Caco-2 (cell line): ENCODE measurements at regions of chr17 and their contacts with region 1.

Region 1: DNA sequence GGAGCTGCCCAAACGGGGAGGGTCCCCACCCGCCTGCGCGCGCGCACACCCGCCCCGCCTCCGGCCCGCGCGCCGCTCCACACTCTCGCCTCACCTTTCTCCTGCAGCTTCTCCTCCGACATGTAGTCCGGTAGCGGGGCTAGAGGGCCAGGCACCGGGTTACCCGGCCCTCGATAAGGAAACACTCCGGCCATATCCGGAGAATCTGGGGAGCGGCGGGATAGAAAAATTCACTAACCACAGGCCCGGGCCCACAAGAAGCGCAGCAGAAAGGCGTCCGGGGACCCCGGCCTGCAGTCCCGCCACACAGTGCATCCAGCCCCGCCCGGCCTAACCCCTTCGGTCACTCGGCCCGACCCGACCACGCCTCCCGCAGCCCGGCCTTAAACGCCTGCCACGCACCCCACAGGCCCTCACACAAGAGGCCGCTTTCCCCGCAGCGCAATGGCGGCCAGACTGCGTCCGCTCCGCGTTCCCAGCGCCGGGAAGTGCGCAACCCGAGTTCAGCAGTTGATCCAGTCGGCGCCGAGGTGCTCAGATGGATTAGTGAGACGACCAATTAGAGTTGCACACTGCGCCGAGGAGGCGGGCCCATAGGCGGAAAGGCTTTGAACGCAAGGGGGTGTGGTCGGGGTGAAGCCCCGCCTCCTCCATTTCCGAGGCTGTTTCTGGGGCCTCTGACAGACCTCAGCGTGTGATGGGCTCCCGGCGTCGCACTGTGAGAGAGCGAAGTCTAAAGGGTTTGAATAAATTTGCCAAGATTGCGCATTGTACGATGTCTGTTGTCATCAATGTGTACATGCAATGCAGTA is at the start of gene PRPF8:
- DNase-seq: peak; percentile 98 to 99
- H3K4me3 ChIP-seq: peak within 1 kb of the TSS; percentile 54
- H3K4me3 Mint-ChIP-seq: peak within 1 kb of the TSS; percentile 91
- H3K27ac Mint-ChIP-seq: peak within 1 kb of the TSS; percentile 95
- H3K4me1 ChIP-seq: peaks cover 5% of the 10 kb centered on the region; the same call in 1 of the 2 replicates
- H3K4me1 Mint-ChIP-seq: peaks cover 13% of the 10 kb centered on the region
- H3K27me3 ChIP-seq: no peaks in the 10 kb centered on the region
- H3K27me3 Mint-ChIP-seq: no peaks in the 10 kb centered on the region
- CTCF ChIP-seq: no peak
- total RNA-seq, gene PRPF8: 398 and 430 TPM in 2 replicates

Region 2: GRCh38 chr17:1673041-1673785 is 11.4 kb before region 1 on chr17:
- CTCF ChIA-PET with region 1: interaction called, 6 read pairs
- POLR2A ChIA-PET with region 1: interaction called, 4 read pairs
- intact Hi-C with region 1: loop called (anchors 1 kb)
- DNase-seq: no peak
- H3K4me3 ChIP-seq: no peak overlapping the region
- H3K4me3 Mint-ChIP-seq: no peak overlapping the region
- H3K27ac Mint-ChIP-seq: no peak overlapping the region
- H3K4me1 ChIP-seq: no peaks in the 10 kb centered on the region
- H3K4me1 Mint-ChIP-seq: peaks cover 23% of the 10 kb centered on the region
- H3K27me3 ChIP-seq: no peaks in the 10 kb centered on the region
- H3K27me3 Mint-ChIP-seq: no peaks in the 10 kb centered on the region
- CTCF ChIP-seq: no peak

Region 3: DNA sequence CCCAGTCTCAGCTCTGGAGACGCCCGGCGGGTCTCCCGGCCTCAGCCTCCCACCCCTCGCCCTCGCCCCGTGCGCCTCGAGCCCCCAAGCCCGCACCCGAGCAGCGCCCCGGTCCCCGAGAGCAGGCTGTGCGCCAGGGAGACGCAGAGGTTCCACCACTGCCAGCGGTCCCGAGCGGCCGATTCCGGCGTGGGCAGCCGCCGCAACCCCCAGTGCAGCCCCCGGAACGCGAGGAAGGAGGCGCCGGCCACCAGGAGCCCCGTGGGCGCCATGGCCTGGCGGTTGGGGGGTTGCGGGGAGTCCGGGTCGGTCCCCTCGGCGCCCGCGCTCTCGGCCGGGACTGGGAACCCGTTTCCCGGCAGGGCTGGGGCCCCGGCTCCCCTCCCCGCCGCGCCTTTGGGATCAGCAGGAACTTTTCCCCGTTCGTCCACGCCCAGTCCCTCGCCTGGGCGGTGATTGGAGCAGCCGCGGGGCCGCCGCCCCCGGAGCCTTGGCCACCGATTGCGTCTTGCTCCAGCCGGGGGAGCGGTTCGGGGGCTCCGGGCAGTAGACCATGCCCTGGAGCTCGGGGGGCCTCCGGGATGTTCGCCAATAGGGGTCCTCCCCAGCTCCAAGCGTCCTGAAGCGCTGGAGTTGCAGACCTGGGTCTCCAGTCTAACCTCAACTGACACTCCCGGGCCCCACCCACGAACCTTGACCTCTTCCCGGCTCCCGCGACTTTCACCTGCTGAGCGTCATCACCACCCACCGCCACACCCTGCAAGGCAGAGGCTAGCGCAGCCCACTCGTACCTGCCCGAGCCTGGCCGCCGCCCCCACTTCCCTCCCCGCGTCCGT is 25.6 kb after region 1 on chr17 and contains the start of gene TLCD2:
- CTCF ChIA-PET with region 1: no interaction called
- POLR2A ChIA-PET with region 1: interaction called, 20 read pairs
- intact Hi-C with region 1: loop called (anchors 2 kb)
- DNase-seq: peak; percentile 92 to 94
- H3K4me3 ChIP-seq: peak within 1 kb of the TSS; percentile 71
- H3K4me3 Mint-ChIP-seq: peak within 1 kb of the TSS; percentile 86
- H3K27ac Mint-ChIP-seq: peak within 1 kb of the TSS; percentile 95
- H3K4me1 ChIP-seq: peaks cover 31% of the 10 kb centered on the region
- H3K4me1 Mint-ChIP-seq: peaks cover 34% of the 10 kb centered on the region
- H3K27me3 ChIP-seq: no peaks in the 10 kb centered on the region
- H3K27me3 Mint-ChIP-seq: no peaks in the 10 kb centered on the region
- CTCF ChIP-seq: no peak
- total RNA-seq, gene TLCD2: 10.1 and 12.0 TPM in 2 replicates